BJ (cell line): ENCODE measurements at regions of chr12 and their contacts with region 1.

Region 1: GRCh38 chr12:4276524-4277204 is 3.1 kb downstream of the CCND2 start:
- DNase-seq: peak; percentile 11
- H3K4me3 ChIP-seq: no peak overlapping the region
- H3K27me3 ChIP-seq: peaks cover 42% of the 10 kb centered on the region
- CTCF ChIP-seq: peak; percentile 91

Region 2: DNA sequence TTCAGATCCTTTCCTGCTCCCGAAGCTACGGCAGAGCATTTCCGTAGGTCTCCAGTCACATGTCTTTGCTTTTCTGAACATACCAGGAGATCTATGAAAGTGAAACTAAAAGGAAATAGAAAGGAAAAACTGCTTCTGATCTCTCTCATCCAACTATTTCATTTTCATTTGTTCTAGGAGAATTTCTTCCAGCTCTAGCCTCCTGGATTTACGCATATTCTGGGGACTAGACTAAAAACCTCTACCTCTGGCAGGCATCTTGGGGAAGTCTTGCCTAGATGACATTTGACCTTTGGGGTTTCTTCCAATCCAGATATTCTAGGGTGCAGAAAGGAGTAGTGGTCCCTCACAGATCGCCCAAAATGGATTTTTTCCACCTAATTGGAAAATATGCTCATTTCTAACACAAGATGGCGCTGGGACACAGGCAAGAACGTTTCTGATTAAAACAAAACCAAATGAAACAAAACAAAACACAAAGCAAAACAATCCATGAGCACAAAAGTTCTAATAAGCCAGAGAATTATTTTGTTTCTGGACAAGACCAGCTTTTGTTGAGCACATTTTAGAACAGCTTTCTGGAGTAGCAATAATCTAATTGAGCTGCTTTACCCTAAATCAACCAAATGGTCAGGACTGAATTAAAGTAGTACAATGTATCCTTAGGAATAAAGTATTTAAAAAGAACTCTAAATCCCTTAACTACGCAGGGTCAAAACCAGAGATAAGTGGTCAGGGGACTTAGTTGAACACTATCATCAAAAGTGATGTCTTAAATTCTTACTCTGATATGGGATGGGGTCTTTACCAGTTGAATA is 391.2 kb before region 1 on chr12:
- CTCF ChIA-PET with region 1: interaction called, 95 read pairs
- POLR2A ChIA-PET with region 1: no interaction called
- DNase-seq: no peak
- H3K4me3 ChIP-seq: peak overlapping the region; percentile 34
- H3K27me3 ChIP-seq: peaks cover 2% of the 10 kb centered on the region
- CTCF ChIP-seq: peak; percentile 77

Region 3: DNA sequence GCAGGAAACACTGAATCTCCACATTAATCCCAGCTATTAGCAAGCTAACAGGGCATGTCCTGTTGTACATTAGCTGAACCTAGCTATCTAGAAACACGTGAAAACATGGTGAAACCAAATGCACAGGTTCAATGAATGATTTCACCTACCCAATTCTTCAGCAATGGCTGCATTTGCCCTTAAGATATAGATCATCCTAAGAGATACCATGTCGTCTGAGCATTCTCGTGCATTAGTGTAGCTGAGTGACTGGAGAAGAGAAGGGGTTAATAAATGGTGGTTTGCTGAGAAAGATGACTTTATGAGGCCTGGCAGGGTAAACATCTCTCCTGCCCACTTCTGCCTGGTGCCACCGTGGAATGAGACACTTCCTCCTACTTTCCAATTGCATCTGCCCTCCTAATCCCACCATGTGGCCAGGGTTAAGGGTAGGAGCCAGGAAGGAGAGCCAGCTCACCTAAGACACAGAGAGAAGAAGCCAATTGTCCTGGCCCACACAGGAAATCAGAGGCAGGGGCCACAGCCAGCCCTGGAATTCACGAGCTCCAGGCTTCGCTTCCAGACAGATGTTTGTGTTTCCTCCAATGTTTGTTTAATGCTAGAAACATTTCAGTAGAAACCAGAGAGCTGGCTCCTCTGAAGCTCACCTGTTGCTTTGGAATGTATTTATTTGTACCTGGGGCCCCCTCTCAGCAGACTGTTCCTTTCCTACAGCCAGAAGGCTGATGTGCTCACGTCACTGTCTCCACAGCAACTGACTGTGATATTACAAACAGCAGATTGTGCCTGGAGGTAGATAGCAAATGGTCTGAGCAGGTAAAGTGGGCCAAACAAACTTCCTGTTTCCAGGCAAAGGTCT is 277.5 kb before region 1 on chr12:
- CTCF ChIA-PET with region 1: interaction called, 41 read pairs
- POLR2A ChIA-PET with region 1: no interaction called
- DNase-seq: no peak
- H3K4me3 ChIP-seq: no peak overlapping the region
- H3K27me3 ChIP-seq: peaks cover 6% of the 10 kb centered on the region
- CTCF ChIP-seq: no peak

Region 4: GRCh38 chr12:4030929-4031702 is 245.5 kb before region 1 on chr12:
- CTCF ChIA-PET with region 1: interaction called, 16 read pairs
- POLR2A ChIA-PET with region 1: interaction called, 14 read pairs
- DNase-seq: peak; percentile 93
- H3K4me3 ChIP-seq: peak overlapping the region; percentile 46
- H3K27me3 ChIP-seq: peaks cover 7% of the 10 kb centered on the region
- CTCF ChIP-seq: no peak

Region 5: DNA sequence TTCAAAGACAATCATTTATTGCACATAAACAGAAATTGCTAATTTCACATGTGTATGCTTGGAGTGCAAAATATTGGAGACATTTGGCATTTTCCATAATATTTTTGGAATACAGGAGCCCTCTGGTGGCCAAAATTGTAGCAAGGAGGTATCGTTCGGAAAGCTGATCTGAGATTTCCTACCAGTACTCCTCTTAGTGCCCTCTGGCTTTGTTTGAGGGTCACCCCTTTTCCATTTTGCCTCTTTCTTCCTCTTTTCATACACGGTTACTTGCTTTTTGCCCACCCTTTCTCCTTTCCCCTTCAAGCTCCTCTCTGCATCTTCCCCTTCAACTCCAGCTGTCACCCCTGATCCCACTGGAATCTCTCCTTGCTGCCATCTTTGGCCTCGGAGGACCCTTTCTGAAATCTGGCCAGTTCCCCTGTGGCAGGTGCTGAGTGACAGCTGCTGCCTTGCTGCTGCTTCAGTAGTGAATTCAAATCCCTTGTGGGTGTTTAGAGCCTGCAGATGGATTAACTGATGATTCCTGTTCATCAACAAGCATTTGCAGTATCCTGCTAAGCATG is 238.8 kb before region 1 on chr12:
- CTCF ChIA-PET with region 1: interaction called, 56 read pairs
- POLR2A ChIA-PET with region 1: no interaction called
- DNase-seq: no peak
- H3K4me3 ChIP-seq: no peak overlapping the region
- H3K27me3 ChIP-seq: peaks cover 11% of the 10 kb centered on the region
- CTCF ChIP-seq: peak; percentile 72

Region 6: DNA sequence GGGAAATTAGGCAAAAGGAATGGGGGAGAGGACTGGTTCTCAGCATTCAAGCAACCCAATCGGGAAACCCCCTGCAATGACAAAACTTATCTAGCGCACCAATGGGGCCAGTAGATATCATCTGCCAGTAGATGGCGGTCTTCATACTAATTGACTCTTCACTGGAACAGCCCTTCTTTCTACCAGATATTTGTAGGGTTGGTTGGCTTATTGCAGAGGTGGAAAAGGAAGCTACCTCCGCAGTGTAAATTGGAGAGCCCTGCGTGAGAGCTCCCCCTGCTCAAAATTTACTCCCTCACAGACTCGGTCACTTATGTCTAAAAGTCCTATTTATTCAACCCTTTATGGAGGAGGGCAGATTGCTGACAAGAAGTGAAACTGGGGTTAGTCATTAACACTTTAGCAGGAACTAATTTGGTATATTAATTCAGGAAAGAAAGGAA is 169.2 kb before region 1 on chr12:
- CTCF ChIA-PET with region 1: interaction called, 50 read pairs
- POLR2A ChIA-PET with region 1: no interaction called
- DNase-seq: no peak
- H3K4me3 ChIP-seq: no peak overlapping the region
- H3K27me3 ChIP-seq: no peaks in the 10 kb centered on the region; the same call in none of the 2 replicates
- CTCF ChIP-seq: peak; percentile 65

Region 7: GRCh38 chr12:4118017-4118510 is 158.6 kb before region 1 on chr12:
- CTCF ChIA-PET with region 1: interaction called, 30 read pairs
- POLR2A ChIA-PET with region 1: interaction called, 3 read pairs
- DNase-seq: peak; percentile 9
- H3K4me3 ChIP-seq: no peak overlapping the region
- H3K27me3 ChIP-seq: no peaks in the 10 kb centered on the region
- CTCF ChIP-seq: no peak